Kidney (tissue), 22 donors: ENCODE measurements at regions of chrX and their contacts with region 1.

Region 1: GRCh38 chrX:11600578-11600977 is 65.1 kb downstream of the ARHGAP6 start:
- DNase-seq: no peak
- H3K4me3 ChIP-seq: no peak overlapping the region
- H3K27ac ChIP-seq: no peak overlapping the region
- H3K4me1 ChIP-seq: peaks cover 0 to 4% (median 2%) of the 10 kb centered on the region in 3 donors
- H3K27me3 ChIP-seq: no peaks in the 10 kb centered on the region
- CTCF ChIP-seq: no peak

Region 2: GRCh38 chrX:11196476-11196875 is 404.1 kb before region 1 on chrX:
- intact Hi-C with region 1: no loop called
- DNase-seq: no peak
- H3K4me3 ChIP-seq: no peak overlapping the region
- H3K27ac ChIP-seq: no peak overlapping the region
- H3K4me1 ChIP-seq: no peaks in the 10 kb centered on the region
- H3K27me3 ChIP-seq: no peaks in the 10 kb centered on the region
- CTCF ChIP-seq: no peak

Region 3: GRCh38 chrX:11553594-11553993 is 47.0 kb before region 1 on chrX:
- intact Hi-C with region 1: loop called (anchors 5 kb)
- DNase-seq: no peak
- H3K4me3 ChIP-seq: no peak overlapping the region
- H3K27ac ChIP-seq: no peak overlapping the region
- H3K4me1 ChIP-seq: no peaks in the 10 kb centered on the region
- H3K27me3 ChIP-seq: no peaks in the 10 kb centered on the region
- CTCF ChIP-seq: no peak

Region 4: DNA sequence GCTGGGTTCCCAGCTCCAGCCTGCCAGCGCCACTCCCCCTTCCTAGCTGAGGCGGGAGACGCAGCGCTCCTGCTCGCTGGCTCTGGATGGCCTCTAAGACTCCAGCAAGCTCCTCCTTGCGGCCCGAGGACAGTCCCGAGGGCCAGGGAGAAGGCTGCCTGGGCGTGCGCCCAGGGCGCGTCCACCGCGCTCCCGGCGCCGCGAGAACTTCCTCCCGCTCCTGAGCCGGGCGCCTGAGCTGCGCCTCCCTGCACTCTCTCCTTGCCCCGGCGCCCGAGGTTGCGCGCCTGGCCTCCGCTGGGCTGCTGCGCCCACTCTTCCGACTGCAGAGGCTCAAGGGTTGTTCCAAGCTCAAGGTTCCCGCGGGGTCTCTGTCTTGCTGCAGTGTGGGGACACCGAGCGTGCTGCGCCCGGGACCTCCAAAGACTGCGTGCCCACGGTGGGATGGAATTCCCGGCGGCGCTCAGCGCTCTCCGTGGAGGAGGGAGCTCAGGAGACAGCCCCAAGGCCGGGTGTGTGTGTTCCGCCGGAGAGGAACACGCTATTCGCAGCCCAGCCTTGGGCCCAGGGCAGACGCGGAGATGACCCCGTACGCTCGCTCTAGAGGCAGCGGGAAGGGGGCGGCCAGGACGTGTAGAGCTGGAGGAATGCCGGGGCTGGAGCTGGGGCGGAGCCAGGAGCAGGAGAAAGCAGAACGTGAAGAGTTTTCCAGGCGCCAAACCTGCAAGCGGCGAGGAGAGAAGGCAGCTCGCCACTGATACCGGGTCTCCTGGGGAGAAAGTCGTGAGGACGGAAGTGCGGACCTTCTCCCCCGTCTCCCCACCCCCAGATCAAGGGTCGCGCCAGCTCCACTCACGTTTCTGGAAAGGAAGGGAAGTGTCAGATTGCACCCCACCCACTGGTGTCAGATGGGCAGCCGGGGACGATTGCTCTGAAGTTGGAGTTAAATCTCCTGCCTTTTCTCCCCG is 64.8 kb after region 1 on chrX and contains the start of gene ARHGAP6:
- intact Hi-C with region 1: no loop called
- DNase-seq: peak; percentile 65 to 85 (median 69)
- H3K4me3 ChIP-seq: peak within 1 kb of the TSS; percentile 50 to 73 (median 68)
- H3K27ac ChIP-seq: peak within 1 kb of the TSS; percentile 80 to 81
- H3K4me1 ChIP-seq: no peaks in the 10 kb centered on the region
- H3K27me3 ChIP-seq: no peaks in the 10 kb centered on the region
- CTCF ChIP-seq: no peak
- total RNA-seq, gene ARHGAP6: 20.4 TPM